ENCODE measurements at regions of chr4 and their contacts with region 1.

Region 1: GRCh38 chr4:34502086-34502485 is 1742.2 kb downstream of the ARAP2 start:
- DNase-seq: no peak
- H3K4me3 ChIP-seq: no peak overlapping the region
- H3K27ac ChIP-seq: no peak overlapping the region
- H3K4me1 ChIP-seq: no peaks in the 10 kb centered on the region
- H3K27me3 ChIP-seq: no peaks in the 10 kb centered on the region
- CTCF ChIP-seq: no peak

Region 2: GRCh38 chr4:34512631-34513030 is 10.5 kb after region 1 on chr4:
- CTCF ChIA-PET with region 1: no interaction called
- POLR2A ChIA-PET with region 1: interaction called, 10 read pairs
- intact Hi-C with region 1: no loop called
- DNase-seq: no peak
- H3K4me3 ChIP-seq: no peak overlapping the region
- H3K27ac ChIP-seq: no peak overlapping the region
- H3K4me1 ChIP-seq: no peaks in the 10 kb centered on the region
- H3K27me3 ChIP-seq: no peaks in the 10 kb centered on the region
- CTCF ChIP-seq: no peak